Heart left ventricle (tissue), 16 donors: ENCODE measurements at regions of chr13 and their contacts with region 1.

Region 1: DNA sequence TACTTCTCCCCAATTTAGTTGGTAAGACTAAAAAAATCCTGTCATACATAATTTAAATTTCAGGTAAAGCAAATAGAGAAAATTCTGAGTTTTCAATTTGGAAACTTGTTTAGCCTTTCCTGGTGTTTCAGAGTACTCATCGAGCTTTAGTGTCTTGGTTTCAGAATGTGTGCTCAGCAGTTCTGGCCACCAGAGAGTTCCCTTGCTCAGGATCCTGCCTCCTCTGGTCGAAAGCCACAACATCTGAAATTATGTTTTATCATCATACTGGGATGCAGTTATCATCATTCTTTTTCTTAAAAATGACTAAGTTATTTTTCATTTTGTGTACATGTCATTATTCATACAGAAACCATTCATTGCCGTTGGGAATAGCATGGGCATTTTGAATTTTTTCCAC is 263.2 kb upstream of the SPRY2 start:
- DNase-seq: peak in 4 of 5 donors; percentile 32 to 37 (median 34)
- ATAC-seq: peak in 3 of 4 donors; percentile 68 to 85 (median 84)
- H3K4me3 ChIP-seq: no peak overlapping the region
- H3K27ac ChIP-seq: peak overlapping the region in 9 of 12 donors; percentile 22 to 58 (median 51)
- H3K4me1 ChIP-seq: peaks cover 0 to 18% (median 0%) of the 10 kb centered on the region in 12 donors
- H3K27me3 ChIP-seq: no peaks in the 10 kb centered on the region
- CTCF ChIP-seq: peak in 8 of 12 donors; percentile 8 to 49 (median 18)
- POLR2A ChIP-seq: no peak

Region 2: GRCh38 chr13:80419416-80419815 is 184.7 kb before region 1 on chr13:
- intact Hi-C with region 1: no loop called
- DNase-seq: no peak
- ATAC-seq: no peak
- H3K4me3 ChIP-seq: no peak overlapping the region
- H3K27ac ChIP-seq: no peak overlapping the region
- H3K4me1 ChIP-seq: no peaks in the 10 kb centered on the region
- H3K27me3 ChIP-seq: no peaks in the 10 kb centered on the region
- CTCF ChIP-seq: no peak
- POLR2A ChIP-seq: no peak

Region 3: DNA sequence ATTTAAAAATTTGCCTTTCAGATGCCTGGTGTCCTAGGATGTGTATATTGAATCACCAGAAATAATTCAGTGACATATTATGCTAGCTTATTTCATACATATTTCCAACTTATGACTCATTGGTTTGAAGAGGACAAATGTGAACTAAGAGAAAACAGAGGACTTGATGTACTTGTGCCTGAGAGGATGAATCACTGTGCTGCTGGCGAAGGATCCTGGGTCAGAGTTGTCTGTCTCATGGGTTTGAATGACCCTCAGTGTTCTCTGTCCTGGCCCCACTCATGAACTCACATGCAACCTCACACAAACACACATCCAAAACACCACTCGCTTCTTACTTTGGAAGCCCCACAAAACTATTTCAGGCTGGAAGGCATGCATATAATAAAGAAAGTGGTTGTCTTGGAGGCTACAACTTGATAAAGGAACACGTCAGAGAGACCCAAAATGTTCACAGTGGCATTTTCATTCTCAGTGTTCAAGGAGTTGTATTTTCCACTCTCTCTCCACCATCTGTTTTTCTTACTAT is 134.2 kb before region 1 on chr13:
- intact Hi-C with region 1: loop called in 1 of 10 experiments (anchors 10 kb)
- DNase-seq: peak; percentile 73 to 89 (median 76)
- ATAC-seq: peak; percentile 98 to 100 (median 98)
- H3K4me3 ChIP-seq: peak overlapping the region in 1 of 12 donors; percentile 4
- H3K27ac ChIP-seq: peak overlapping the region; percentile 79 to 96 (median 86)
- H3K4me1 ChIP-seq: peaks cover 8 to 36% (median 24%) of the 10 kb centered on the region in 12 donors
- H3K27me3 ChIP-seq: no peaks in the 10 kb centered on the region
- CTCF ChIP-seq: no peak
- POLR2A ChIP-seq: no peak

Region 4: DNA sequence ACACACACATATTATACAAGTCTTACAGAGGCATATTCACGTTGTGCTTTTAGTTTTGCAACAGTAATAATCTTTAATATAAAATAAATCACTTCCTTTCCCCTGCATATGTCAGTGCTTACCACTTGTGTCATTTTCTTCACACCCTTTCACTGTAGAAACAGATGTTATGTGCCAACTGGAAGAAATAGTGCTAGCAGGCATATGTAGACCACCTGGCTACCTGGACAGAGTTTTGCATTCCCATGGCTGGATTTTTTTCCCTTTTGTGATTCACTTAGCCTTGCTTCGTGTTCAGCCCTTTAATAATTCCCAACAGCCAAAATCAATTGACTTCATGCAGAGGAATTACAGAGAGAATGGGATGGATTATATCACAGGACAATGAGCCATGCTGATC is 136.0 kb after region 1 on chr13:
- intact Hi-C with region 1: no loop called
- DNase-seq: no peak
- ATAC-seq: no peak
- H3K4me3 ChIP-seq: no peak overlapping the region
- H3K27ac ChIP-seq: no peak overlapping the region
- H3K4me1 ChIP-seq: peaks cover 0 to 4% (median 0%) of the 10 kb centered on the region in 12 donors
- H3K27me3 ChIP-seq: no peaks in the 10 kb centered on the region
- CTCF ChIP-seq: no peak
- POLR2A ChIP-seq: no peak